Mammary epithelial cell (primary cell): ENCODE measurements at regions of chr4 and their contacts with region 1.

Region 1: GRCh38 chr4:90727938-90728337 is 600.7 kb downstream of the CCSER1 start:
- DNase-seq: peak; percentile 43
- H3K4me3 ChIP-seq: no peak overlapping the region
- H3K27ac ChIP-seq: peak overlapping the region; percentile 43
- H3K4me1 ChIP-seq: peaks cover 15% of the 10 kb centered on the region
- H3K27me3 ChIP-seq: no peaks in the 10 kb centered on the region
- CTCF ChIP-seq: no peak

Region 2: DNA sequence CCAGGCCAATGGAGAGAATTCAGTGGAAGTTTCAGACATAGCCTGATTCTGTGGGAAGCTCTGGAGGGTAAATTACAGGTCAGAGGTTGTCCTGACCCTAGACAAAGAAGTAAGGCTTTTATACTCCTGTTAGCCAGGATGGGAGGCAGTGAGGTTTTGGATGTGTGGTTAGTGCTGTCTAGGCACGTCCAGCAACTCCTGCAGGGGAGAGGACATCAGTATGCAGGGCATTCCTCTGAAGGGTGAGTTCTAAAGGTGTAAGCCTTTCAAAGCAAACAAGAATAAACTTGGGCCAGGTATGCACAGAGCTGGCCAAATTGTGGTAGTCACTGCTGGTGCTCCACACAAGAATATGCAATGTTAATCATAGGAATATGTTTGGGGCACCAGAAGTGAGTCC is 38.2 kb before region 1 on chr4:
- CTCF ChIA-PET with region 1: no interaction called
- dilution Hi-C with region 1: no loop called
- in situ Hi-C with region 1: no loop called
- intact Hi-C with region 1: loop called (anchors 5 kb)
- DNase-seq: peak; percentile 85
- H3K4me3 ChIP-seq: no peak overlapping the region
- H3K27ac ChIP-seq: peak overlapping the region; percentile 61
- H3K4me1 ChIP-seq: peaks cover 20% of the 10 kb centered on the region
- H3K27me3 ChIP-seq: no peaks in the 10 kb centered on the region
- CTCF ChIP-seq: no peak